Activated T-helper 1 cell treated with anti-CD3 and anti-CD28 coated beads, Interleukin-12 subunit alpha, Interleukin-12 subunit beta, Interleukin-2, Interleukin-4 antibody, amounts not matched to agents 30 ng/mL and 10 ng/mL and 1 ng/mL, durations not matched to agents 14 hours and 24 hours and 36 hours (primary cell): ENCODE measurements at regions of chr15 and their contacts with region 1.

Region 1: DNA sequence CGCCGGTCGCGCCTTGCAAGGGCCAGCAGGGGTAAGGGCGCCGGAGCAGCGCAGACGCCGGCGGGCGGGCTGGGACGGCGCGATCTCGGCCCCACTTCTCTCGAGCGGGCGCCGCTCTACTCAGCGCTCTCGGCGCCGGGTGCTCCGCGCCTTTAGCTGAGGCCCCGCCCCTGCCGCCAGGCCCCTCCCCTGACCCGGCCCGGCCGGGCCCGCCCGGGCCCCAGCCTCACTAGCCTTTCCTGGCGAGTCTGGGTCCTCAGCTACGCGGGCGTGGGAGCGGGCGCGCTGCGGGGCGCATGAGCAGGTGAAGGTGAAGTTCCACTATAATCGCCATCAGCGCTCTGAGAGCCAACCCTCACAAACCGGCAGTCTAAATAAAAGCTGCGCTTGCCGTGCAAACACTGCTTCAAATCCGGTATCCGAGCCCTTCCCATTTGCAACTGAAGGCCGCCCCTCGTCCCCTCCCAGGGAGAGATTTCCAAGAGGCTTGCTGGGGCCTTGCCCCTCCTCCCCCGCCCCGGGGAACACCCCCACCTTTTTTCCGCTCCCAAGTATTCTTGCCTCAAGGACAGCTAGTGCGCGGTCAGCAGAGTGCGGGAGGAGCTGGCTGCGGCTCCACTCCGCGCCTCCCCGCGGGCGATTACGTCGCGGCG is at the start of gene RPP25:
- DNase-seq: peak; percentile 69
- H3K4me3 Mint-ChIP-seq: peak within 1 kb of the TSS; percentile 70
- H3K27ac Mint-ChIP-seq: no peak within 1 kb of the TSS
- H3K4me1 Mint-ChIP-seq: peaks cover 36% of the 10 kb centered on the region
- H3K27me3 Mint-ChIP-seq: peaks cover 44% of the 10 kb centered on the region
- total RNA-seq, gene RPP25: 13.3 and 15.3 TPM in 2 replicates

Region 2: DNA sequence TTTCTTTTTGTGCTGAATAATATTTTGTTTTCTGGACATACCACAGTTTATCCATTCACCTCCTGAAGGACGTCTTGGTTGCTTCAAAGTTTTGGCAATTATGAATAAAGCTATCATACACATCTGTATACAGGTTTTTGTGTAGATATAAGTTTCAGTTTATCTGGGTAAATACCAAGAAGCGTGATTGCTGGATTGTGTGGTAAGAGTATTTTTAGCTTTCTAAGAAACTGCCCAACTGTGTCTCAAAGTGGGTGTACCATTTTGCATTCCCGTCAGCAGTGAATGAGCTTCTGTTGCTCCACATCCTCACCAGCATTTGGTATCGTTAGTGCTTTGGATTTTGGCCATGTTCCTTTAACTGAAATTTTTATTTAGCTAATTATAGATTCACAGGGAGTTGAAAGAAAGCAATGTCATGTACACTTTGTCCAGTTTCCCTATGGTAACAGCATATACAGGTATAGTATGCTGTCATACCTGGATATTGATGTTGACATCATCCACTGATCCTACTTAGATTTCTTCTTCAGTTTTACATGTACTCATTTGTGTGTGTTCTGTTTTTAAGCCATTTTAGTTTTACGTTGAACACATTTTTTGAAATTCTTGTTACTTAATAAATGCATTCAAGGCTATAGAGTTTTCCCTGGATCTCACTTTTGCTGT is 403.9 kb before region 1 on chr15:
- intact Hi-C with region 1: no loop called
- DNase-seq: no peak
- H3K4me3 Mint-ChIP-seq: peak overlapping the region; percentile 62
- H3K27ac Mint-ChIP-seq: peak overlapping the region; percentile 84
- H3K4me1 Mint-ChIP-seq: peaks cover 73% of the 10 kb centered on the region
- H3K27me3 Mint-ChIP-seq: no peaks in the 10 kb centered on the region

Region 3: GRCh38 chr15:74787251-74788041 is 169.3 kb before region 1 on chr15:
- intact Hi-C with region 1: loop called (anchors 1 kb)
- DNase-seq: peak; percentile 89
- H3K4me3 Mint-ChIP-seq: peak overlapping the region; percentile 86
- H3K27ac Mint-ChIP-seq: peak overlapping the region; percentile 98
- H3K4me1 Mint-ChIP-seq: peaks cover 65% of the 10 kb centered on the region
- H3K27me3 Mint-ChIP-seq: no peaks in the 10 kb centered on the region

Region 4: GRCh38 chr15:74937596-74938296 is 19.0 kb before region 1 on chr15 and contains the start of gene COX5A:
- intact Hi-C with region 1: loop called (anchors 1 kb)
- DNase-seq: peak; percentile 91
- H3K4me3 Mint-ChIP-seq: peak within 1 kb of the TSS; percentile 91
- H3K27ac Mint-ChIP-seq: peak within 1 kb of the TSS; percentile 91
- H3K4me1 Mint-ChIP-seq: peaks cover 22% of the 10 kb centered on the region
- H3K27me3 Mint-ChIP-seq: no peaks in the 10 kb centered on the region
- total RNA-seq, gene COX5A: 273 and 290 TPM in 2 replicates

Region 5: GRCh38 chr15:74983725-74984231 is 27.0 kb after region 1 on chr15:
- intact Hi-C with region 1: loop called (anchors 1 kb)
- DNase-seq: no peak
- H3K4me3 Mint-ChIP-seq: peak overlapping the region; percentile 15
- H3K27ac Mint-ChIP-seq: peak overlapping the region; percentile 77
- H3K4me1 Mint-ChIP-seq: peaks cover 9% of the 10 kb centered on the region
- H3K27me3 Mint-ChIP-seq: no peaks in the 10 kb centered on the region

Region 6: DNA sequence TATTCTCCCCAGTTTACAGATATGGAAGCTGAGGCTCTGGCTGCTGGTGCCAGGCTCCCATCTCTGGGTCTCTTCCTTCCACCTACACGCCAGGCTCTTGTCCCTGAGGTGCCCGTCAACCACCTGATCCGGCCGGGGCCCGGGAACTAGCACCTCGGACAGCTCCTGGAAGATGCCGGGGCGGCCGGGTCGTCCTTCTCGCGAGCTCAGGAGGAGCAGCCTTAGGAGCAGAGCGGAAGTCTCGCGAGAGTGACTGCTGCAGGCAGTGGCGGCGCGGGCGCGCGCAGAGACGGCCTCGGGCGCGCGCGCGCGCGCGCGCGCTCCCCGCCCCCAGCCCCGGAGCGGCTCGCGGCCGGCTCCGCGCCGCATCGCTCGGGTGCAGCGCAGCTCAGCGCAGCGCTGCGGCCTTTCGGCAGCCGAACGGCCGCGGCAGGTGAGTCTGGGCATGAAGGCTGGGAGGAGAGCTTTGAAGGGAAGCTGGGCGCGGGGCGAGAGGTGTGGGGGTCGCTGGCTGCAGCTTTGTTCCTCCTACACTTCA is 38.5 kb after region 1 on chr15 and contains the start of gene SCAMP5:
- intact Hi-C with region 1: loop called (anchors 1 kb)
- DNase-seq: peak; percentile 92
- H3K4me3 Mint-ChIP-seq: peak within 1 kb of the TSS; percentile 70
- H3K27ac Mint-ChIP-seq: no peak within 1 kb of the TSS
- H3K4me1 Mint-ChIP-seq: peaks cover 4% of the 10 kb centered on the region
- H3K27me3 Mint-ChIP-seq: peaks cover 33% of the 10 kb centered on the region
- total RNA-seq, gene SCAMP5: 2.0 and 3.5 TPM in 2 replicates

Region 7: GRCh38 chr15:75023181-75023871 is 66.6 kb after region 1 on chr15 and contains the start of gene PPCDC:
- intact Hi-C with region 1: loop called (anchors 1 kb)
- DNase-seq: peak; percentile 93
- H3K4me3 Mint-ChIP-seq: peak within 1 kb of the TSS; percentile 96
- H3K27ac Mint-ChIP-seq: peak within 1 kb of the TSS; percentile 90
- H3K4me1 Mint-ChIP-seq: peaks cover 23% of the 10 kb centered on the region
- H3K27me3 Mint-ChIP-seq: no peaks in the 10 kb centered on the region
- total RNA-seq, gene PPCDC: 25.0 and 27.1 TPM in 2 replicates